Dendritic cell treated with granulocyte-macrophage colony-stimulating factor and Interleukin-4, amounts not matched to agents 40 ng/mL and 50 ng/mL, for 4 days (primary cell): ENCODE measurements at regions of chr14 and their contacts with region 1.

Region 1: DNA sequence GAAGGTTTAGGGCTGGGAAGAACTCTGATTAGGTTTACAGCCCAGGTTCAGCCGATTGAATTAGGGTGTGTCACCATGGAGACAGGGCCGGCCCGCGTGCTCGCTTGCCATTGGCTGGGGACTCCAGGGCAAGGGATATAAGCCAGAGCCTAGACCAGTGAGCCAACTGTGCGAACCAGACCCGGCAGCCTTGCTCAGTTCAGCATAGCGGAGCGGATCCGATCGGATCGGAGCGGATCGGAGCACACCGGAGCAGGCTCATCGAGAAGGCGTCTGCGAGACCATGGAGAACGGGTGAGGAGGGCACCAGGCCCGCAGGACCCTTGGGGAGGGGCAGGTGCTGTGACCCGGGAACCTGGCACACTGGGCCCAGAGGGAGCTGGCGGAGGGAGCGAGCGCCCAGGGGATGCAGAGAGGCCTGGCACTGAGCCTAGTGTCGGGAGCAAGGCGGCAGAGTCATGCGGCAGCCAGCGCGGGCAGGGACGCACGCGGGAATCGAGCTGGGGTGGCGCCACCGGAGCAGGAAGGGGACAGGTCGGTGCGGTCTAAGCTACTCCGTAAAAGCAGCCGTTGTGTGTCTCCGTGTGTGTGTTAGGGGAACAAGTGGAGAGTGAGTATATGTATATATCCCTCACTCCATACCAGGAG is at the start of gene PNP:
- H3K4me3 Mint-ChIP-seq: peak within 1 kb of the TSS; percentile 92
- H3K27ac Mint-ChIP-seq: peak within 1 kb of the TSS; percentile 91
- H3K4me1 Mint-ChIP-seq: peaks cover 48% of the 10 kb centered on the region
- H3K27me3 Mint-ChIP-seq: no peaks in the 10 kb centered on the region

Region 2: DNA sequence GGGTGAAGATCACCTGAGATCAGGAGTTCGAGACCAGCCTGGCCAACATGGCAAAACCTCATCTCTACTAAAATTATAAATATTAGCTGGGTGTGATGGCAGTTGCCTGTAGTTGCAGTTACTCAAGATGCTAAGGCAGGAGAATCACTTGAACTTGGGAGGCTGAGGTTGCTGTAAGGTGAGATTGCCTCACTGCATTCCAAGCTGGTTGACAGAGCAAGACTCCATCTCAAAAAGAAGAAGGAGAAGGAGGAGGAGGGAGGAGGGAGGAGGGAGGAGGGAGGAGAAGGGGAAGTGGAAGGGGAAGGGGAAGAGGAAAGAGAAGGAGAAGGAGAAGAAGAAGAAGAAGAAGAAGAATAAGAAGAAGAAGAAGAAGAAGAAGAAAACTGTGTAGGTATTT is 53.0 kb after region 1 on chr14:
- intact Hi-C with region 1: loop called (anchors 10 kb)
- H3K4me3 Mint-ChIP-seq: no peak overlapping the region
- H3K27ac Mint-ChIP-seq: no peak overlapping the region
- H3K4me1 Mint-ChIP-seq: peaks cover 9% of the 10 kb centered on the region
- H3K27me3 Mint-ChIP-seq: no peaks in the 10 kb centered on the region